PC-9 (cell line): ENCODE measurements at regions of chr6 and their contacts with region 1.

Region 1: DNA sequence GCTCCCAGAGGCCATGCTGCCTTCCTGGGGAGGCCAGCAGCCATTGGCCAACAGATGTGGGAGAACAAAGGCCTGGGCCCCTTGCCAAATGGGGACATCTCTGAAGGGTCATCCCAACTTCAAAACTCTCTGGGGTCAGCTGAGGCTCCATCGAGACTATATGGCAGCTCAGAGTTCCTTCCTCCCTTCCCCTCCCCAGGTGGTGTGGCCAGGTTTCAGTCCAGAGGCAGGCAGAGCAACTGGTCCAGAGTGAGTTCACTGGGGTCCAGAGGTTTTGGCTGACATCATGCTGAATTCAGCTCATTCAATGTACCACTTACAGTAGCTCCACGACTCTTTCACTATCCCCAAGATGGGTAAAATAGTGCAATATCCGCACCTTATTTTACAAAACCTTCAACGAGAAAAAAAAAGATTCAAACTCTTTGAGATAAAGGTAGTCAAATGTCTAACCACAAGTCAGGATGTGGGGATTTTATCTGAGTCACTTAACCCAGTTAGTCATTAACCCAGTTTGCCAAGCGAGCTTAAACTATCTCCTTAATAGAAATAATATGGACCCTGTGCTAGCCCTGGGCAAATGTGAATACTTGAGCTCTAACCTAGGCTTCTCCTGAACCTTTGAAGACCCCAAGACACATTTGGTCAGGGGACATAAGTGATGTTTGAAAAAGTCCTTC is 108.4 kb upstream of the PLEKHG1 start:
- DNase-seq: peak; percentile 14 to 87
- H3K4me3 ChIP-seq: peak overlapping the region; percentile 45; the same call in 1 of the 2 replicates
- H3K27ac ChIP-seq: peak overlapping the region; percentile 98
- H3K4me1 ChIP-seq: peaks cover 50% of the 10 kb centered on the region
- H3K27me3 ChIP-seq: no peaks in the 10 kb centered on the region
- CTCF ChIP-seq: no peak

Region 2: GRCh38 chr6:150417899-150418826 is 73.1 kb before region 1 on chr6:
- CTCF ChIA-PET with region 1: no interaction called
- POLR2A ChIA-PET with region 1: no interaction called
- intact Hi-C with region 1: loop called (anchors 2 kb)
- DNase-seq: peak in 1 of 2 experiments; percentile 84
- H3K4me3 ChIP-seq: peak overlapping the region; percentile 52; the same call in 1 of the 2 replicates
- H3K27ac ChIP-seq: peak overlapping the region; percentile 91
- H3K4me1 ChIP-seq: peaks cover 30% of the 10 kb centered on the region
- H3K27me3 ChIP-seq: no peaks in the 10 kb centered on the region
- CTCF ChIP-seq: peak; percentile 76

Region 3: DNA sequence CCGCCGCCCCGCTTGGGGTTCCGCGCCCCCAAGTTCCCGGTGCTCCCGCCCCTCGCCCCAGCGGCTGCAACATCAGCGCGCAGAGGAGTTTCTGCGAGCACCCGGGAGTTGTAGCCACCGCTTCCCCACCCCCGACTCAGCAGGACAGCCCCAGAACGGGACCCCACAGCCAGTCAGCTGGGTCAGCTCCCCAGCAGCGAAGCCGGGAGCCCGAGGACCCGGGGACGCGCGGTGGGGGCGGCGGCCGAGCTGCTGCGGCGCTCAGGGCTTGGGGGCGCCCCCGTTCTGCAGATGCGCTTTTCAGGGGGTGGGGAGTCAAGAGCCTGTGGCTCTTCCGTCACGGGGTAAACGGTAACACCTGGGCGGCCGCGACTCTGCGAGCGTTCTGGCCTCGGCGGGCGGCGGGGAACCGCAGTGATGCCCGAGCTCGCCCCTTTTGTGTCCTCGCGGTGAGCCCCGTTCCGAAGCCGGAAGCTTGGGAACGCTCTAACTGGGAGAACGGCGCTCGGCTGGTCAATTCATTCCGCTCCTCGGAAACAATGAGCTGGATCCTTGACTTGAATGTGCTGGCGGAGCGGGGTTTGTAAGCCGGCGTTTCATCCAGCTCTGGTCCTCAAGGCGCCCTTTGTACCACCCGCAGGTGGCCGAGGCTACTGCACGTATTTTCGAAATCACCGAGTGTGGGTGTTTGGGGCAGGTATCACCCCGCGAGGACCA is 109.2 kb after region 1 on chr6:
- CTCF ChIA-PET with region 1: no interaction called
- POLR2A ChIA-PET with region 1: interaction called, 3 read pairs
- intact Hi-C with region 1: loop called (anchors 10 kb)
- DNase-seq: peak; percentile 65 to 78
- H3K4me3 ChIP-seq: peak overlapping the region; percentile 95
- H3K27ac ChIP-seq: peak overlapping the region; percentile 51; the same call in 1 of the 2 replicates
- H3K4me1 ChIP-seq: peaks cover 8% of the 10 kb centered on the region
- H3K27me3 ChIP-seq: no peaks in the 10 kb centered on the region
- CTCF ChIP-seq: peak; percentile 69

Region 4: GRCh38 chr6:150667977-150668716 is 176.9 kb after region 1 on chr6:
- CTCF ChIA-PET with region 1: no interaction called
- POLR2A ChIA-PET with region 1: no interaction called
- intact Hi-C with region 1: loop called (anchors 5 kb)
- DNase-seq: peak; percentile 88 to 90
- H3K4me3 ChIP-seq: peak overlapping the region; percentile 26; the same call in 1 of the 2 replicates
- H3K27ac ChIP-seq: peak overlapping the region; percentile 88
- H3K4me1 ChIP-seq: peaks cover 28% of the 10 kb centered on the region
- H3K27me3 ChIP-seq: no peaks in the 10 kb centered on the region
- CTCF ChIP-seq: no peak; the same call in 1 of the 2 replicates